ENCODE measurements at regions of chr17 and their contacts with region 1.

Region 1: DNA sequence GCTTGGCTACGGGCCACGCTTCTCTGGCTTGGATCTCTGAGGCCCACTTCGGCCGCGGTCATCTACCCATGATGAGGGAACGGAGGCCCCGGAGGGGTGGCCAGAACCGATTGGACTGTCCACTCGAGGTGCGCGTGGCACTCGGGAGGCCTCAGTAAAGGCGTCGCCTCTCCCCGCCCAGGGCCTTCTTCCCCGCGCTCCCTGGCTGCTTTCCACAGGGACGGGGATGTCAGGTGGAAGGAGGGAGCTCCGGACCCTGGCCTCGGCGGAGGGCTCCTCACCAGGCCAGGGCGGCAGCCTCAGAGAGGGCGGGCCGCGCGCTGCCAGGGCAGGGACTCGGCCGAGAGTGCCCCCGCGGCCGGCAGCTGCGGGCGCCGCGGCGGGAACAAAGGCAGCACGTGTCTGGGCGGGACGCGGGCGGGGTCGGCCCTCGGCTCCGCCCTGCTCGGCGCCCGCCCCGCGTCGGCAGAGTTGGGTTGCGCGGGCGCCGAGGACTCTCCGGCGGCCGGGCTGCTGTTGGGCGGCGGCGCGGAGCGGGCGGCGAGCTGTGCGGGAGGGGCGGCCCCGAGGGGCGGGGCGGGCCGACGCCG is 587 bp upstream of the CDK5R1 start:
- DNase-seq: peak; percentile 74 to 90 (median 89)
- ATAC-seq: peak; percentile 82 to 83
- H3K4me3 ChIP-seq: peak overlapping the region; percentile 96
- H3K27ac ChIP-seq: peak overlapping the region; percentile 74
- H3K4me1 ChIP-seq: peaks cover 6% of the 10 kb centered on the region
- H3K27me3 ChIP-seq: no peaks in the 10 kb centered on the region

Region 2: GRCh38 chr17:32240750-32241149 is 245.5 kb before region 1 on chr17:
- intact Hi-C with region 1: no loop called
- DNase-seq: peak in 2 of 3 donors; percentile 74 to 77
- ATAC-seq: peak; percentile 76 to 82
- H3K4me3 ChIP-seq: no peak overlapping the region
- H3K27ac ChIP-seq: no peak overlapping the region
- H3K4me1 ChIP-seq: no peaks in the 10 kb centered on the region
- H3K27me3 ChIP-seq: no peaks in the 10 kb centered on the region

Region 3: GRCh38 chr17:32370426-32370825 is 115.8 kb before region 1 on chr17:
- intact Hi-C with region 1: no loop called
- DNase-seq: no peak
- ATAC-seq: no peak
- H3K4me3 ChIP-seq: no peak overlapping the region
- H3K27ac ChIP-seq: no peak overlapping the region
- H3K4me1 ChIP-seq: no peaks in the 10 kb centered on the region
- H3K27me3 ChIP-seq: no peaks in the 10 kb centered on the region

Region 4: DNA sequence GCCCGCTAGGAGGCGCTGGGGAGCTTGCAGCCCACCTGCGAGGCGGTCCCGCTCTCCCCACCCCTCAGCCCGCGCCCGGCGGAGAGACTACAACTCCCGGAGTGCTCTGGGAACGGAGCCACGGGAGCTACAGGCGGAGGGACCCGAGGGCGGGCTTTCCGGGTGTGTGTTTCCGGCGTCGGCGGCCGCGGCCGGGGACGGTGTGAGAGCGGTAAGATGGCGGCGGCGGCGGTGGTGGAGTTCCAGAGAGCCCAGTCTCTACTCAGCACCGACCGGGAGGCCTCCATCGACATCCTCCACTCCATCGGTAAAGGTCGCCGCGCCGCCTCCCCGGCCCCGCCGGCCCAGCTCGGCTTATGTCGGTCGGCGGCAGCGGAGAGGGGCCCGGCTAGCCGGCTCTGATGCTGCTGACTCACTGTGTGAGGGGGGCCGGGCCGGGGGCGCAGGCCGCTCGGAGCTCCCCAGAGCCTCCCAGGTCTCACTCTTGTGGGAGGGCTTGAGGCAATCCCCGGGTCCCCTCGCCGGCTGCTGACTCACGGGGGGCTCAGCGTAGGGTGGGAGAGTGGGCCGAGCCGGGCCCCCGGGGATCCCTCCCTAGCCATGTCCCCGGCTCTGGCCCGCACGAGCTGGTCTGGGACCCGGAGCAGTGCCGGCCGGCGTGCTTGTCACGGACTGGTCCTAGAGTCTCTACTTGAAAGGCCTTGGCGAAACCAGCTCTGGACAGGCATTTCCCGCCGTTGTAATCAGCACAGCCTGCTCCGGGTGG is 41.7 kb before region 1 on chr17 and contains the start of gene PSMD11:
- intact Hi-C with region 1: no loop called
- DNase-seq: peak; percentile 99 to 100 (median 99)
- ATAC-seq: peak; percentile 98
- H3K4me3 ChIP-seq: peak within 1 kb of the TSS; percentile 98
- H3K27ac ChIP-seq: peak within 1 kb of the TSS; percentile 54
- H3K4me1 ChIP-seq: no peaks in the 10 kb centered on the region
- H3K27me3 ChIP-seq: no peaks in the 10 kb centered on the region
- total RNA-seq, gene PSMD11: 55.0 to 79.1 (median 64.4) TPM

Region 5: DNA sequence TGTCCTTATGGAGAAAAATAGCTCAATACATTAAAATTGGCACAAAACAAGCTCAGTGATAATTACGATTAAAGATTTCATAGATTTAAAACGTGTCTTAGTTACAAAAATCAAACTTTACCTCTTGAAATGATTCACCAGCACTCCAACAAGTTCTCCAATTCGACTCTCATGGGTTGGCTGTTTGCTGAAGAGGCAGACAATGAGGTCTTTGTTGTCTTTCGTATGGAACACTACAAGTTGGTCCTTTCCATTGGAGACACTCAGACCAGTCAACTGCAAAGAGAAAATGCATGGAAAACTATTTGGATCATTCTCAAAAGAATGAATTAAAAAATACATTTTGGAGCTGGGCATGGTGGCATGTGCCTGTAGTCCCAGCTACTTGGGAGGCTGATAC is 118.8 kb after region 1 on chr17:
- intact Hi-C with region 1: no loop called
- DNase-seq: no peak
- ATAC-seq: no peak
- H3K4me3 ChIP-seq: no peak overlapping the region
- H3K27ac ChIP-seq: no peak overlapping the region
- H3K4me1 ChIP-seq: no peaks in the 10 kb centered on the region
- H3K27me3 ChIP-seq: no peaks in the 10 kb centered on the region

Region 6: DNA sequence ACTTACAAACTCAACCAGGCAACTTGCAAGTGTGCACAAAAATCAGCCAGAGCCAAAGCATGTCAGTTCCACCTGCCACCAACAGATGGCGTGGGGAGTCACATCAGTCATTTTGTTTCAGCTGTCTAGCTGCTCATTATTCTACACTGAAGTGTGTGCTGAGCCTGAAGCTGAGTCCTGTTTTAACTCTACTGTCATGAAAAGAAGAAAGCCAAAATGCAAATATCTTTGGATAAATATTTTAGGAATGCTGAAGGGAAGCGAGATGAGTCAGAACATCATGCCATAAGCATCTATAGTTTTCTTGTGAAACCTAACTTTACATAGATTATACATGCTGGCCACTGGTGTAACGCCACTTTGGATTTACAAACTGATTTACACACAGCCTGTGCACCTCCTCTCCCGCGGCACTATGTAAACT is 173.2 kb after region 1 on chr17:
- intact Hi-C with region 1: loop called in 1 of 4 experiments (anchors 10 kb)
- DNase-seq: peak; percentile 47 to 90 (median 83)
- ATAC-seq: peak; percentile 77 to 79
- H3K4me3 ChIP-seq: no peak overlapping the region
- H3K27ac ChIP-seq: no peak overlapping the region
- H3K4me1 ChIP-seq: no peaks in the 10 kb centered on the region
- H3K27me3 ChIP-seq: no peaks in the 10 kb centered on the region

Measured in right cardiac atrium (tissue), 5 donors.